ENCODE measurements at regions of chr12 and their contacts with region 1.

Region 1: GRCh38 chr12:121550974-121551634 is 29.7 kb downstream of the KDM2B start:
- DNase-seq: no peak
- H3K4me3 ChIP-seq: no peak overlapping the region
- H3K4me3 Mint-ChIP-seq: no peak overlapping the region
- H3K27ac ChIP-seq: no peak overlapping the region
- H3K27ac Mint-ChIP-seq: peak overlapping the region; percentile 10 to 98 (median 96)
- H3K4me1 ChIP-seq: peaks cover 13% of the 10 kb centered on the region
- H3K4me1 Mint-ChIP-seq: peaks cover 9 to 12% (median 12%) of the 10 kb centered on the region in 3 donors
- H3K27me3 ChIP-seq: no peaks in the 10 kb centered on the region
- H3K27me3 Mint-ChIP-seq: no peaks in the 10 kb centered on the region

Region 2: GRCh38 chr12:121600702-121601336 is 49.7 kb after region 1 on chr12:
- CTCF ChIA-PET with region 1: interaction called, 16 read pairs
- POLR2A ChIA-PET with region 1: no interaction called
- DNase-seq: no peak
- H3K4me3 ChIP-seq: no peak overlapping the region
- H3K4me3 Mint-ChIP-seq: no peak overlapping the region
- H3K27ac ChIP-seq: no peak overlapping the region
- H3K27ac Mint-ChIP-seq: peak overlapping the region in 1 of 8 donors; percentile 43
- H3K4me1 ChIP-seq: no peaks in the 10 kb centered on the region
- H3K4me1 Mint-ChIP-seq: peaks cover 0 to under 1% (median 0%) of the 10 kb centered on the region in 3 donors
- H3K27me3 ChIP-seq: no peaks in the 10 kb centered on the region
- H3K27me3 Mint-ChIP-seq: no peaks in the 10 kb centered on the region

Measured in CD8-positive, alpha-beta memory T cell (primary cell).